Esophagus muscularis mucosa (tissue), 4 donors: ENCODE measurements at regions of chr10 and their contacts with region 1.

Region 1: DNA sequence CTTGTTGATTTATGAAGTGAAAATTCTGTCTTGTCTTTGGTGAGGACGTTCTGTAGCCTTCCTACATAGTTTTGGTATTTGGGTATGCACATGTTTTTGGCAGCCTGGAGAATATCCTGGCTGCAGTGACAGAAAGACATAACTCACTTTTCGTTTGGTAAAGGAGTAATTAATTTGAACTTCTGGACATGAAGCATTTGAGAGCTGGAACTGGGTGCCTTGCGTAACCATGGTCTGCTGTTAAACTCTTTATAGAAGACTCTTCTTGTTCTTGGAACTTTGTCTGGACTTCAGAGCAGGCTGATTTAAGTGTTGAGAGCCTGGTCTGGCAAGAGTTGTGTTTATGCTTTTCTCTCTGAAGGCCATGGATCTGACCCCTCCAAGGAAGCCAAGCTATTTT is 231.3 kb downstream of the LRMDA start:
- DNase-seq: peak; percentile 93
- H3K4me3 ChIP-seq: peak overlapping the region in 1 of 4 donors; percentile 5
- H3K27ac ChIP-seq: peak overlapping the region; percentile 77 to 86 (median 84)
- H3K4me1 ChIP-seq: peaks cover 27 to 79% (median 70%) of the 10 kb centered on the region in 4 donors
- H3K27me3 ChIP-seq: no peaks in the 10 kb centered on the region
- CTCF ChIP-seq: no peak
- EP300 ChIP-seq: peak; percentile 67
- POLR2A ChIP-seq: no peak

Region 2: GRCh38 chr10:75612904-75613684 is 49.6 kb before region 1 on chr10:
- intact Hi-C with region 1: loop called (anchors 5 kb)
- DNase-seq: no peak
- H3K4me3 ChIP-seq: no peak overlapping the region
- H3K27ac ChIP-seq: peak overlapping the region; percentile 1 to 56 (median 28)
- H3K4me1 ChIP-seq: peaks cover 20 to 53% (median 49%) of the 10 kb centered on the region in 4 donors
- H3K27me3 ChIP-seq: no peaks in the 10 kb centered on the region
- CTCF ChIP-seq: no peak
- EP300 ChIP-seq: no peak
- POLR2A ChIP-seq: no peak

Region 3: DNA sequence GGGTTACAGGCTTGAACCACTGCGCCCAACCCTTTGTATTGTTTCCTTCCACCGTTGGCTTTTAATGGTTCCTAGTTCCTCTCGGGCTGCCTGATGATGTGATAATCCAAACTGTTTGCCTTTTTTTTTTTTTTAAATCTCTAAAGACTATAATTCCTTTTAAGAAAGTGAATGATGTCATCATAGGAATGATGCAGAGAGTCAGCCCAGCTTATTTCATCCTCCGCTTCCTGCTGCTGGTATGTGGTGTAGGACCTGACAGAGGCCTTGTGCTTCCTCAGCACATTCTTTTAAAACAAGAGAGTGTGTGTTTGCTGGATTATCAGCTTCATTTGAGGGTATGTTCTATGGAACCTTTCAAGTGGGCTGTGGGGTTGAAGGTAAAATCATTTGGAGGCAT is 10.1 kb after region 1 on chr10:
- intact Hi-C with region 1: no loop called
- DNase-seq: no peak
- H3K4me3 ChIP-seq: no peak overlapping the region
- H3K27ac ChIP-seq: no peak overlapping the region
- H3K4me1 ChIP-seq: peaks cover 0 to 15% (median 14%) of the 10 kb centered on the region in 4 donors
- H3K27me3 ChIP-seq: no peaks in the 10 kb centered on the region
- CTCF ChIP-seq: no peak
- EP300 ChIP-seq: no peak
- POLR2A ChIP-seq: no peak

Region 4: GRCh38 chr10:75772153-75772887 is 109.6 kb after region 1 on chr10:
- intact Hi-C with region 1: loop called (anchors 10 kb)
- DNase-seq: no peak
- H3K4me3 ChIP-seq: peak overlapping the region; percentile 6 to 43 (median 21)
- H3K27ac ChIP-seq: peak overlapping the region; percentile 56 to 74 (median 58)
- H3K4me1 ChIP-seq: peaks cover 5 to 65% (median 53%) of the 10 kb centered on the region in 4 donors
- H3K27me3 ChIP-seq: no peaks in the 10 kb centered on the region
- CTCF ChIP-seq: no peak
- EP300 ChIP-seq: no peak
- POLR2A ChIP-seq: no peak

Region 5: DNA sequence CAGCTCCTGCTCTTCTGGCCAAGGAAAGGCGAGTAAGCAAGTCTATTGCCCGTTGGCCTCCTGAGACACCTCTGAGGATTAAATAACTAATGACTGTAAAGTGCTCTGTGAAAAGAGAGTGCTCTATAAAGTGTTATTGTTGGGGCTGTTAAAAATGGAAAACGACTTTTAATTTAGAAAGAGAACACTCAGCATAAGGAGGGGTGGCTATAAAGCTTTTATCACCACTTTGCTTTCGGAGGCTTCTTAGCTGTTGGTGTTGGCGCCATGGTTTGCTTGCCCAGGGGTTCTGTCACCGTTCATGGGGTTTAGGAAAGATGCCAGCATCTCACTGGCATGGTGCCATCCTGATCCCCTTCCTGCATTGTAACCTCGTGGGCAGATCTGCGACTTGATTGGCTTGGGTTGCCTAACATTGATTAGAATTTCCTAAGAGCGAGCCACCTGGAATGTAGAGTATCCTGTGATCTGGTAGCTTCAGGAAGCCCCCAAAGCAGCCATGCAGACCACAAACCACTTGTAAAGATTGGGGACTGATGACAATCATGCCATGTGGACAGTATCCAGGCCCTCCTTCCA is 278.6 kb after region 1 on chr10:
- intact Hi-C with region 1: no loop called
- DNase-seq: no peak
- H3K4me3 ChIP-seq: no peak overlapping the region
- H3K27ac ChIP-seq: no peak overlapping the region
- H3K4me1 ChIP-seq: no peaks in the 10 kb centered on the region
- H3K27me3 ChIP-seq: no peaks in the 10 kb centered on the region
- CTCF ChIP-seq: no peak
- EP300 ChIP-seq: no peak
- POLR2A ChIP-seq: no peak

Region 6: GRCh38 chr10:76403912-76404311 is 741.2 kb after region 1 on chr10:
- intact Hi-C with region 1: no loop called
- DNase-seq: no peak
- H3K4me3 ChIP-seq: no peak overlapping the region
- H3K27ac ChIP-seq: no peak overlapping the region
- H3K4me1 ChIP-seq: peaks cover 3 to 6% (median 5%) of the 10 kb centered on the region in 4 donors
- H3K27me3 ChIP-seq: no peaks in the 10 kb centered on the region
- CTCF ChIP-seq: no peak
- EP300 ChIP-seq: no peak
- POLR2A ChIP-seq: no peak